Activated T-helper 1 cell treated with anti-CD3 and anti-CD28 coated beads, Interleukin-12 subunit alpha, Interleukin-12 subunit beta, Interleukin-2, Interleukin-4 antibody, amounts not matched to agents 30 ng/mL and 10 ng/mL and 1 ng/mL, durations not matched to agents 14 hours and 24 hours and 36 hours (primary cell): ENCODE measurements at regions of chrX and their contacts with region 1.

Region 1: DNA sequence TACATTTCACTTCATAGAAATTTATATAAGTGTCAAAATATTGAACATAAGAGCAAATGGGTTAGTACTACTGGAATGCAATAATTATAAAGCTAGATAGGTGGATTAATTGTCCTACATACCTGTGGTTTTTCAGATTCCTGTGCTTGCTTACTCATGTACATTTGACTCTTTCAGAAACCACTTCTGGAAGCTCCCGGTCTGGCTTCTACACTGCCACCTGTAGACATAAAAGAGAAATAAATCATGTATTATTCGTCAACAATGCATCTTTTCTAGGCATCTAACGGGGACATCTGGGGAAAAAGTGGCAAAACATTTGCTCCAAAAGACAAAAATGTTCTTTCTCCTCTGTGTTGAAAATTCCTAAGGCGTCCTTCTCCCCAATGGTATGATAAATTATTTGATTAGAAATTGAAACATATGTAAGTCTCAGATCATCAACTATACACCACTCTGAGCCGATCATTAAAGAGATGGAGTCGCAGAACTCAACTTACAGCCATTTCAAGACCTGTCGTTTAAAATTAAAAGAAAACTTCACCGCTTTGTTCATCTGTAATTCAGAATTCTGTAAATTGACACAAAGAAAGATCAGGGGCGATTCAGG is 648.7 kb upstream of the DIPK2B start:
- DNase-seq: no peak
- H3K4me3 Mint-ChIP-seq: peak overlapping the region; percentile 94
- H3K27ac Mint-ChIP-seq: peak overlapping the region; percentile 94
- H3K4me1 Mint-ChIP-seq: peaks cover 34% of the 10 kb centered on the region
- H3K27me3 Mint-ChIP-seq: no peaks in the 10 kb centered on the region

Region 2: DNA sequence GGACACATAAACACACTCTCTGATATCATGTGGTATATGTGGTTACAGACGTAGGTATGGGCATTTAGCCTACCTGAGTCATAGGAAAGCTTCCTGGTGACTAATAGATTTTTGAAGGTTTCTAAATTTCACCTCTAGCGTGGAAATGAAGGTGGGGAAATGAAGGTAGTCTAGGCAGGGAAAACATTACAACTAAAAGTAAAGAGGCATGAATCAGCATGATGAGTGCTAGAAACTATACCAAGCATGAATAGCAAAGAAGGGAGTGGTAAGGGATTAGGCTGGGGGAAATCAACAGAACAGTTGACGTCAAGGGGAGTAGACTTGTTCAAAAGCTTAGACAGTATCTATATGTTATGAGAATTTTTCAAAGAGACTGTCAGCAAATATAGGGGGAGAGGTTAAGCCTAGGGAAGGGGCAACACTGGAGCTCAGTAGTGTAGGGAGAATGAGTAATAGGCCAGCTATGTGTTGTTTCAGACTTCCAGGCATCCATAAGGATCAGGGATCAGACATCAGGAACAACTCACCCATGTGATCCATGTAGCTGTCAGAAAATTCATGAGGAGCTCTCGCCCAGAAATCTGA is 369.4 kb before region 1 on chrX:
- intact Hi-C with region 1: no loop called
- DNase-seq: no peak
- H3K4me3 Mint-ChIP-seq: no peak overlapping the region
- H3K27ac Mint-ChIP-seq: no peak overlapping the region
- H3K4me1 Mint-ChIP-seq: no peaks in the 10 kb centered on the region
- H3K27me3 Mint-ChIP-seq: no peaks in the 10 kb centered on the region

Region 3: GRCh38 chrX:45621376-45622041 is 227.8 kb before region 1 on chrX:
- intact Hi-C with region 1: loop called (anchors 2 kb)
- DNase-seq: no peak
- H3K4me3 Mint-ChIP-seq: no peak overlapping the region
- H3K27ac Mint-ChIP-seq: peak overlapping the region; percentile 91
- H3K4me1 Mint-ChIP-seq: peaks cover 19% of the 10 kb centered on the region
- H3K27me3 Mint-ChIP-seq: no peaks in the 10 kb centered on the region

Region 4: DNA sequence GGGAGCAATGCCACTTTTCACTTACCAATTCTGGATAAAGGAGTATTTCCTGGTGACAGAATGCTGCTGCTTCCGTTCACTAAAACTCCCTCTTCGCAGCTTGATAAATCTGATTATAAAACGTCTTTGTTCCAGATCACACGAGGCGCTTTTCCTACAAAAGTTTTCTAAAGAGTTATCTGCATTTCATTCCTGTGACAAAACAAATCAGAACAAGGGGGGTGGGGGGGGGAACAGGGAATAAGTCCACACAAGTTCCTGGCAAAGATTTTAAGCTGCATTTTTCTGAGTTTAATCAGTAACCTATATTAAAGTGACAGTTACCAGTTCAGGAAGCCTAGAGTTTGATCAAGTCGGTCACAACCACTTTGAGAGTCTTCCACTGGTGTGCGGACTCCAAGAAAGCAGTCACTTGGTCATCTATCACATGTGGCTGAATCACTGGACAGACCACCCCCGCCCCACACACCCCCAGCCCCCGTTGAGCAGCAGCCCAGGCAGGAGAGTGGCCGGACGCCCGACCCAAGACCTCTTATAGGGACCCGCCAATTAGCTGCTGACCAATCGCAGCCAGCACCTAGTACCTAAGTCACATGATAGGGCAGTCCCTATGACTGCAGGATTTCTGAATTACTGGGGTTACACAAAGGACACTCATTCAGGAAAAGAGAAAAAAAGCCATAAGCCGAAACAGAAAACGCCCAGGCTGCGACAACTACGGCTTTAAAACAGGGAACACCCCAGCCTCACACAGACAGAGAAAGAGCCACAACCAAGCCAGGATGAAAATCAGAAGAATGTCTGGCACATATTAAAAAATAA is 79.4 kb before region 1 on chrX:
- intact Hi-C with region 1: loop called (anchors 1 kb)
- DNase-seq: peak; percentile 6
- H3K4me3 Mint-ChIP-seq: peak overlapping the region; percentile 98
- H3K27ac Mint-ChIP-seq: peak overlapping the region; percentile 98
- H3K4me1 Mint-ChIP-seq: peaks cover 59% of the 10 kb centered on the region
- H3K27me3 Mint-ChIP-seq: no peaks in the 10 kb centered on the region

Region 5: GRCh38 chrX:45824471-45824870 is 24.9 kb before region 1 on chrX:
- intact Hi-C with region 1: loop called (anchors 2 kb)
- DNase-seq: no peak
- H3K4me3 Mint-ChIP-seq: peak overlapping the region; percentile 9
- H3K27ac Mint-ChIP-seq: peak overlapping the region; percentile 80
- H3K4me1 Mint-ChIP-seq: peaks cover 25% of the 10 kb centered on the region
- H3K27me3 Mint-ChIP-seq: no peaks in the 10 kb centered on the region

Region 6: GRCh38 chrX:46325312-46325877 is 476.0 kb after region 1 on chrX:
- intact Hi-C with region 1: loop called (anchors 2 kb)
- DNase-seq: no peak
- H3K4me3 Mint-ChIP-seq: no peak overlapping the region
- H3K27ac Mint-ChIP-seq: peak overlapping the region; percentile 65
- H3K4me1 Mint-ChIP-seq: peaks cover 49% of the 10 kb centered on the region
- H3K27me3 Mint-ChIP-seq: no peaks in the 10 kb centered on the region